ENCODE measurements at regions of chr9 and their contacts with region 1.

Region 1: GRCh38 chr9:133335878-133336811 is at the start of gene SURF6:
- DNase-seq: peak; percentile 86 to 97 (median 90)
- ATAC-seq: peak; percentile 97 to 99 (median 97)
- H3K4me3 ChIP-seq: peak within 1 kb of the TSS; percentile 63 to 85 (median 81)
- H3K27ac ChIP-seq: peak within 1 kb of the TSS; percentile 42 to 60 (median 52)
- H3K4me1 ChIP-seq: peaks cover 7 to 8% (median 8%) of the 10 kb centered on the region in 3 donors
- H3K27me3 ChIP-seq: no peaks in the 10 kb centered on the region
- CTCF ChIP-seq: no peak
- total RNA-seq, gene SURF6: 5.8 to 13.6 (median 7.6) TPM

Region 2: GRCh38 chr9:133184962-133185361 is 151.2 kb before region 1 on chr9:
- intact Hi-C with region 1: loop called in 2 of 3 experiments (anchors 5 to 10 kb)
- DNase-seq: peak in 2 of 6 donors; percentile 30 to 42
- ATAC-seq: peak; percentile 72 to 91 (median 87)
- H3K4me3 ChIP-seq: no peak overlapping the region
- H3K27ac ChIP-seq: no peak overlapping the region
- H3K4me1 ChIP-seq: no peaks in the 10 kb centered on the region
- H3K27me3 ChIP-seq: no peaks in the 10 kb centered on the region
- CTCF ChIP-seq: peak in 2 of 4 donors; percentile 32 to 38